Endothelial cell of umbilical vein (primary cell): ENCODE measurements at regions of chr6 and their contacts with region 1.

Region 1: DNA sequence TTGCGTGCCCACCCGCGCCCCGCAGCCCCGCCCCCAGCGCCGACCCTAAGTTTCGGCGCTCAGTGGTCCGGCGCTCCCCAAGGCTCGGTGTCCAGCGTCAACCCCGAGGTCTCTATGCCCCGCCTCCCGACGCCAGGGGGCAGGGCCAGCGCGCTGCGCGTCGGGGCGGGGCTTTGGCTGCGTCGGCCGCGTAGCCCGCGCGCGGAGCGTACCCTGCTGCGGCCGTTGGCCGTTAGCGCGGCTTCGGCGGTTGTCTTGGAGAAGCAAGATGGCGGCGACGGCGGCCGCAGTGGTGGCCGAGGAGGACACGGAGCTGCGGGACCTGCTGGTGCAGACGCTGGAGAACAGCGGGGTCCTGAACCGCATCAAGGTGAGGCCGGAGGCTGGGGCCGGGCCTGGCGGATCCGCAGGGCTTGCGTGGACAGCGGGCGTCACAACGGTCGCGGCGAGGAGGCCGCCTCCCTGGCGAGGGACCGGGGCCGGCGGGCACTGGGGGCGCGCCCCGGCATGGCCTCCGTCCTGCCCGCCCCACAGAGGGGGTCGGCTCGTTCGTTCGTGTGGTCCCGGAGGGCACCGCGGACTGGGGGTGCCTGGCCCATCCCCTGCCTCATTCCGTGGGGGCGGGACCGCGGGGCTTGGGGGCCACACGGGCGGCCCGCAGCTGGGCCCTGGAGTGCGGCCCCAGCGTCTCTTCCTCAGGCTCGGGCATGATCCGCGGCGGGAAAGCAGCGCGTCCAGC is at the start of gene CEP43:
- DNase-seq: peak; percentile 98
- H3K4me3 ChIP-seq: peak within 1 kb of the TSS; percentile 60 to 93 (median 86)
- H3K27ac ChIP-seq: peak within 1 kb of the TSS; percentile 52
- H3K4me1 ChIP-seq: peaks cover 20% of the 10 kb centered on the region
- H3K27me3 ChIP-seq: no peaks in the 10 kb centered on the region
- CTCF ChIP-seq: no peak
- POLR2A ChIP-seq: peak; percentile 61
- total RNA-seq, gene CEP43: 19.0 and 22.5 TPM in 2 replicates

Region 2: GRCh38 chr6:166956444-166957086 is 42.7 kb before region 1 on chr6 and contains the start of gene RNASET2:
- CTCF ChIA-PET with region 1: interaction called, 7 read pairs
- POLR2A ChIA-PET with region 1: no interaction called
- dilution Hi-C with region 1: no loop called
- intact Hi-C with region 1: loop called (anchors 1 kb)
- DNase-seq: peak; percentile 91
- H3K4me3 ChIP-seq: peak within 1 kb of the TSS; percentile 60 to 63 (median 61)
- H3K27ac ChIP-seq: no peak within 1 kb of the TSS
- H3K4me1 ChIP-seq: peaks cover 21% of the 10 kb centered on the region
- H3K27me3 ChIP-seq: no peaks in the 10 kb centered on the region
- CTCF ChIP-seq: no peak
- POLR2A ChIP-seq: peak; percentile 20
- total RNA-seq, gene RNASET2: 10.0 and 10.7 TPM in 2 replicates

Region 3: GRCh38 chr6:167013067-167013466 is 13.8 kb after region 1 on chr6:
- CTCF ChIA-PET with region 1: interaction called, 13 read pairs
- POLR2A ChIA-PET with region 1: no interaction called
- dilution Hi-C with region 1: no loop called
- intact Hi-C with region 1: no loop called
- DNase-seq: no peak
- H3K4me3 ChIP-seq: no peak overlapping the region
- H3K27ac ChIP-seq: no peak overlapping the region
- H3K4me1 ChIP-seq: no peaks in the 10 kb centered on the region
- H3K27me3 ChIP-seq: no peaks in the 10 kb centered on the region
- CTCF ChIP-seq: no peak
- POLR2A ChIP-seq: no peak

Region 4: DNA sequence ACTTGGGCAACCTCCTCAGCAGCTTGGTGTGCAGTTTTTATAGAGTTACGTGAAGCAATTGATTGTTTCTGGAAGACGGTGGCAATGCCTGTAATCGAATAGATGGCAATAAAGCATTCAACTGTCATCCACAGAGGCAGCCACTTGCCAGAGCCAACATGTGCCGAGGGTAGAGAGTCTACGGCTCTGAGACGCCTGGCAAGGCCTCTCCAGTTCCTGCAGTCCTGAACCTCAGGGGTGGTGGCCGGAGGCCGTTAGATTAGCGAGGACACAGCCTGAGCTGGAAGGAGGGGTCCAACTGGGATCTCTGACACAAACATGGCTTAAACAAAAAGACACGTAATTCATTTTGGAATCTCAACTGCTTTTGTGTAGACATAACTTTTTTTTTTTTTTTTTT is 324.8 kb after region 1 on chr6:
- CTCF ChIA-PET with region 1: no interaction called
- POLR2A ChIA-PET with region 1: no interaction called
- dilution Hi-C with region 1: no loop called
- intact Hi-C with region 1: no loop called
- DNase-seq: no peak
- H3K4me3 ChIP-seq: no peak overlapping the region
- H3K27ac ChIP-seq: no peak overlapping the region
- H3K4me1 ChIP-seq: no peaks in the 10 kb centered on the region
- H3K27me3 ChIP-seq: no peaks in the 10 kb centered on the region
- CTCF ChIP-seq: no peak
- POLR2A ChIP-seq: no peak

Region 5: DNA sequence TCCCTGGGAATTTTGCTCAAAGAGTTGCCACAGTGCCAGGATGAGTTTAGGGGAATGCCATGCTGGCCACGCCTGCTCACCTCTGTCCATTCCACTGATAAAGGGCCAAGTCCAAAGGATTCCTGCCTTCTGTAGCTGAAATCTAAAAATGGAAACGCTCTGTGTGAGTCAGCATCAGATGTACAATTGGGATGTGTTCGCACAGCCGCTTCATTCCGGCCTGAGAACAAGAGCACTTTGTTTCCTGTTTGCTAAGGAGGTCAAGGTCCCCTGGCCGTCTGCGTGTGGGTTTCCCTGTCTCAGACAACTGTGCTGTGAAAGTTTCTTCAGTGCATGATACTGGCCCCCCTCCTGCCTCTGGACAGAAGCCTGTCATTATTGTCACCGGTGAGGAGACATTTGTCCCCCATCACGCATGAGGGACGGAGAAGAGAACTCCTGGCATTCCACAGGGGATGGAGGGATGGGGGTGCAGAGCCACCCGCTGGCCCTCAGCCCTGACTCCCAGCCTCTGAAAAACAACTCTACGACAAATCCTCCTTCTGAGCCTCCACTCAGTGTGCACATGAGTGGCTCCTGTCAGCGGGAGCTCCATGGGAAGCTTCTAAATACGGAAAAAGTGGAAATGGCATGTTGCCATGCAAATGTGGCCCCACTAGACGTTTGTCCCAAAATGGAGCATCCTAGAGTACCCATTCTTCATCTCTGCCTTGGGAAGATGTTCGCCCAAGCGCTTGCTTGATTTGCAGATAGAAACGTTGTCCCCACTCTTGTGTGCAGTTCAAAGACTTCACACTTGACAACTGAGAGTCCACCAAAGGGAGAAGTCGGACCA is 683.9 kb after region 1 on chr6:
- CTCF ChIA-PET with region 1: no interaction called
- POLR2A ChIA-PET with region 1: no interaction called
- dilution Hi-C with region 1: no loop called
- intact Hi-C with region 1: loop called (anchors 5 kb)
- DNase-seq: peak; percentile 94
- H3K4me3 ChIP-seq: no peak overlapping the region
- H3K27ac ChIP-seq: peak overlapping the region; percentile 76
- H3K4me1 ChIP-seq: peaks cover 24% of the 10 kb centered on the region
- H3K27me3 ChIP-seq: peaks cover 0 to under 1% of the 10 kb centered on the region in 2 experiments
- CTCF ChIP-seq: no peak
- POLR2A ChIP-seq: no peak